ENCODE measurements at regions of chr22 and their contacts with region 1.

Region 1: DNA sequence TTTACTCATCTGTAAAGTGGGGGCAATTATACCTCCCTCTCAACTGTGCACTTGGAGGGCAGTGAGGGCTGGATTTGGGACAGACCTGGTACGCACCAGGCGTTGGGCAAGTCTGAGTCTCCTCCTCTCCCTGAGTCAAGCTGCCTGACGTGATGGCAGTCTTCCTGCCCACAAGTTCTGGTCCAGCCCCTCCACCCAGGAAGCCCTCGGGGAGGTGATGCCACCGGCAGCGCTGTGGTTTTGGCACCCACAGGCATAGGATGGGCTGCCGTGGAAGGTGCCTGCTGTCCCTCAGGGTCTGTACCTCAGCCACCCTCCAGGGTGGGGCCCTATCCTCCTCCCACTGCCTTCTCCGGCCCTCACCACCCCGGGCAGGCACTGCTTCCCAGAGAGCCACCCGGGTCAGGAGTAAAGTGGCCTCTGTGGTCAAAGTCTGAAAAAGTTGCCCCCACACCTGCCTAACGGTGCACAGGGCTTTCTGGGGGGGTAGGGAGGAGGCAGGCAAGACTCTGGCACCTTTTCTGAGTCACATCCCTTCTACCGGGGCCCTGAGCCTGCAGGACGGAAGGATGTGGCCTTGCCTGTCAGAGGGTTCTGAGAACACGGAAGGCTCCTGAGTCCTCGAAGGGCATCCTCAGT is 6.5 kb upstream of the APOBEC3H start:
- DNase-seq: peak; percentile 96
- ATAC-seq: peak; percentile 80
- H3K4me3 ChIP-seq: no peak overlapping the region
- H3K27ac ChIP-seq: peak overlapping the region; percentile 97
- H3K4me1 ChIP-seq: peaks cover 34% of the 10 kb centered on the region
- H3K27me3 ChIP-seq: no peaks in the 10 kb centered on the region
- CTCF ChIP-seq: no peak

Region 2: GRCh38 chr22:39013942-39014722 is 76.4 kb before region 1 on chr22 and contains the start of gene APOBEC3C:
- CTCF ChIA-PET with region 1: no interaction called
- POLR2A ChIA-PET with region 1: no interaction called
- intact Hi-C with region 1: loop called (anchors 2 kb)
- DNase-seq: peak; percentile 85
- ATAC-seq: peak; percentile 92
- H3K4me3 ChIP-seq: peak within 1 kb of the TSS; percentile 91
- H3K27ac ChIP-seq: peak within 1 kb of the TSS; percentile 72
- H3K4me1 ChIP-seq: peaks cover 7% of the 10 kb centered on the region; the same call in 1 of the 2 replicates
- H3K27me3 ChIP-seq: no peaks in the 10 kb centered on the region
- CTCF ChIP-seq: peak; percentile 18; the same call in 1 of the 2 replicates
- total RNA-seq, gene APOBEC3C: 35.5 and 37.8 TPM in 2 replicates

Region 3: GRCh38 chr22:39123751-39124601 is 33.4 kb after region 1 on chr22:
- CTCF ChIA-PET with region 1: no interaction called
- POLR2A ChIA-PET with region 1: no interaction called
- intact Hi-C with region 1: no loop called
- DNase-seq: no peak
- ATAC-seq: no peak
- H3K4me3 ChIP-seq: no peak overlapping the region
- H3K27ac ChIP-seq: no peak overlapping the region
- H3K4me1 ChIP-seq: no peaks in the 10 kb centered on the region; the same call in 1 of the 2 replicates
- H3K27me3 ChIP-seq: no peaks in the 10 kb centered on the region
- CTCF ChIP-seq: no peak

Region 4: GRCh38 chr22:39152511-39153219 is 62.1 kb after region 1 on chr22 and contains the start of gene CBX7:
- CTCF ChIA-PET with region 1: no interaction called
- POLR2A ChIA-PET with region 1: no interaction called
- intact Hi-C with region 1: no loop called
- DNase-seq: peak; percentile 84
- ATAC-seq: peak; percentile 91
- H3K4me3 ChIP-seq: peak within 1 kb of the TSS; percentile 71
- H3K27ac ChIP-seq: no peak within 1 kb of the TSS
- H3K4me1 ChIP-seq: peaks cover 5% of the 10 kb centered on the region; the same call in 1 of the 2 replicates
- H3K27me3 ChIP-seq: no peaks in the 10 kb centered on the region
- CTCF ChIP-seq: no peak
- total RNA-seq, gene CBX7: 8.0 and 8.6 TPM in 2 replicates